Left colon (tissue), 2 donors: ENCODE measurements at regions of chr7 and their contacts with region 1.

Region 1: DNA sequence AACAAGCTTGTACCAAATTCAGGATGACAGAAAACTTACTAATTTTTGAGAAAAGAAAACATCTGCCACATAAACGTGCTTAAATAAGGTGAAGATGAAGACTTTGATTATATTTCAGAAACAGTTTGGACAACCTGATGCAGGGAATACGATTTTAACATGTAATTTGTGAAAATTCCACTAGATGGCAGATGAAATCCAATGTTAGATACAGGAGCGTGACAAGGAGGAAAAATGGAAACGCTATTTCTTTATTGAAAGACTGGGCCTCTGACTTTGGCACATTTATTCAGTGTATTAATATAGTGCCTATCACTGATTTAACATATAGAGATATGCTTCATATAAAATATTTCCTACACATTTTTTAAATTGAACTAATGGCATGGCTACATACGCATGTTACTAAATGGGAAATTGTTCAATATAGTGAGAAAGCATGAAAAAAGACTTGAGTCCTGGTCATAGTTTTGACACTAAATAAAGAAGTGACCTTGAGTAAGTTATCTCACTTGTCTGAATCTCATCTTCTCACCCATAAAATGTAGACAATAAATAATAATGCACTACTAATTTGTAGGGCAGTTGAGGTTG is 60.7 kb downstream of the CD36 start:
- DNase-seq: no peak
- ATAC-seq: peak; percentile 67

Region 2: DNA sequence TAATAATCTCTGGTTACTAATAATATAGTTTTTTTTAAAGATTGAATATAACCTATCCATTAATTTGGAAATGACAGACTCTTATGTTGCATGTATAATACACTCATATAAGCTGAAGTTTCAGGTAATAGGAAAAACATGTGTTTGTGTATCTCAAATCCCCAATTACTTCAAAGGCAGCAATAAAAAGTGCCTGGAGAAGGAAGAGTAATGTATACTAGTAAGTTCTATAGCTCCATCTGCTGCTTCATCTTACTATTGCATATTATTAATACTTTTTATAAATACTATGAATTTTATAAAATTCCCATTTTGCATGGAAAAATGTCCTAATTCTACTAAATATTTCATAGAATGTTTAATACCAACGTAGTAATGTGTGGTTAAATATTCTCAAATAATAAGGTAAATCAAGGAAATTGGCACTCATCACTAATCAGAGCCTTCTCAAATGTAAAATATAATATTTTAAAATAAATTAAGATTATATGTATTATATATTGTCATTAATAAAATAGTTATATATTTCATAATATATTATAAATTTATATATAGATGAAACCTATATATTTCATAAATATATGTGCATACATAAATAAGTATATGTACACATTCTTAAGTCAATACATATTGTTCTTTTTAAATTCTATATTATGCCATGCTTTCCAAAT is 758.8 kb after region 1 on chr7:
- intact Hi-C with region 1: loop called in 1 of 2 experiments (anchors 10 kb)
- DNase-seq: no peak
- ATAC-seq: peak; percentile 56

Region 3: GRCh38 chr7:81469869-81470723 is 771.0 kb after region 1 on chr7:
- intact Hi-C with region 1: loop called in 1 of 2 experiments (anchors 5 kb)
- DNase-seq: peak; percentile 73 to 77
- ATAC-seq: peak; percentile 79